Right ventricle myocardium inferior (tissue), 1 donor: ENCODE measurements at regions of chr6 and their contacts with region 1.

Region 1: GRCh38 chr6:71190809-71191208 is 97.8 kb upstream of the OGFRL1 start:
- DNase-seq: no peak
- ATAC-seq: no peak

Region 2: DNA sequence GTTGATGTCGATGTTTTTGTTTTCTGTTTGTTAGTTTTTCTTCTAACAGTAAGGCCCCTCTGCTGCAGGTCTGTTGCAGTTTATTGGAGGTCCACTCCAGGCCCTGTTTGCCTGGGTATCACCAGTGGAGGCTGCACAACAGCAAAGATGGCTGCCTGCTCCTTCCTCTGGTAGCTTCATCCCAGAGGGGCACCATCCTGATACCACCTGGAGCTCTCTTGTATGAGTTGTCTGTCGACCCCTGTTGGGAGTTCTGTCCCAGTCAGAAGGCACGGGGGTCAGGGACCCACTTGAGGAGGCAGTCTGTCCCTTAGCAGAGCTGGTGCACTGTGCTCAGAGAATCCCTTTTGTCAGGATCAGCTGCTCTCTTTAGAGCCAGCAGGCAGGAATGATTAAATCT is 690.1 kb before region 1 on chr6:
- intact Hi-C with region 1: no loop called
- DNase-seq: no peak
- ATAC-seq: no peak

Region 3: GRCh38 chr6:71289002-71289869 is 98.4 kb after region 1 on chr6:
- intact Hi-C with region 1: no loop called
- DNase-seq: peak; percentile 75
- ATAC-seq: peak; percentile 4

Region 4: DNA sequence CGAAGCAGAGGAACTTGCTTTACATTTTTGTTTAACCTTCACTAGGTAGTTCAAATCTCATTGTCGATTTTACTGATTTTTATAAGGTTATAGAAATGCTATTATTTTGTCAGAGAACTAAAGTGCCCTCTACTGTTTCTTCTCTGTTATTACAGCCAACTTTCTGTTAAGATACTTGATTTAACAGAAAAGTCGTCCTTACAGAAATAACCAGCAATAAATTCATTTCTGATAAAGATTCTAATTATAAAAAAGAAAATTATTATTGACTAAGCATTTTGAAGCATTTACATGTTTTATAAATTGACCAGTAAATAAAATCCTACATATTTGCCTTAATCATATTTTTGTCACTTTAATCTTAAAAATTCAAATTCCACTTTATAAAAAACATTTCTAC is 158.6 kb after region 1 on chr6:
- intact Hi-C with region 1: loop called (anchors 2 kb)
- DNase-seq: no peak
- ATAC-seq: no peak

Region 5: DNA sequence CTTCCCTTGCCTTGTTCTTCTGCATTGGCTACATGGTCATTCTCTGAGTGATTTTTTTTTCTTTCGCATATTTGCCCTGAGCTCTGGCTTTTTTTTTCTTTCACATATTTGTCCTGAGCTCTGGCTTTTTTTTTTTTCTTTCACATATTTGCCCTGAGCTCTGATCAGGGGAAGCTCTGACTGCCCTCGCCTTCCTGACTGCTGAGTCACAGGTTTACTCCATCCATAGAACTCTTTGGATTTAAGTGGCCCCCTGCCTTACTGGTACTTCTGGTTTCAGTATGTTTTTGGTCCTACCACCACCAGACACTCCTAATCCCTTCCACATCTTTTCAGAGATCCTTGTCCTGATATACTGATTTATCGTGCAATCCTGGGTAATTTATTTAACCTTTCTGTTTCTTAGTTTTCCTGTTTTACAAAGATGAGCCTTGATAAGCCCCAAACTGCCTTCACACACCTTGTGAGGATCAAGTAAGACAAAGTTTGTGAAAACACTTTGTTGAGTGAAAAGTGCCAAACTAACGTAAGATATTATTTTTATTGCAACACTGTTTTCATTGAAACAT is 299.0 kb after region 1 on chr6:
- intact Hi-C with region 1: loop called (anchors 10 kb)
- DNase-seq: no peak
- ATAC-seq: no peak

Region 6: DNA sequence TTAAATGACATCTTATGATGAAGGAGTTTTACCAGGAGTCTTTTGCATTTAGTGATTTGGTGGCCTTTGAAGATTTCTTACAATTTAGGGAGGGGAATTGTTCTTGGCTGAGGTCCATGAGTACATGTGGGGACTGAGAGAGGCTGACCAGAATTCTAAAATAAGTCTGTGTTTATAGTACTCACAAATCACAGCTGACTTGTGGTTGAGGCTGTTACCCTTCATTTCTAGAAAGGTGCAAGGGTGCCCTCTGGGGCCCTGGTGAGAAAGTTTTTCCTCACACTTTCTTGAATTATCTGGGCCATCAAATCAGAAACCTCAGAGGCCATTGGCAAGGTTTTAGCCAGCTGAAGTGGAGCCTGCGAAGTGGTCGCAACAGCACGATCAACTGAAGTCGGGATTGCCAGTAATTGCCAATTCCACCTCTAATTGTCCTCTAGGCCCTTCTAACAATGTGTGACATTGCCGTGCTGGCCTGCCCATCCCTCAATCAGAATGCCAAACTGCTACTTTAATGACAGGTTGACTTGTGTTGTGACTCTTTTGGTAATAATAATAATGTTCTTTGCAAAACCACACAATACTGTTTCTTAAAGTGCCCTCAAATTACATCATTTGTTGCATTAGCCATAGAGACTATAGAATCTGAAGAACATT is 319.4 kb after region 1 on chr6:
- intact Hi-C with region 1: loop called (anchors 2 kb)
- DNase-seq: no peak
- ATAC-seq: peak; percentile 74